ENCODE measurements at regions of chr10 and their contacts with region 1.

Region 1: GRCh38 chr10:3776796-3777571 is 8.0 kb downstream of the KLF6 start:
- DNase-seq: peak; percentile 80 to 81
- ATAC-seq: peak; percentile 20
- H3K4me3 ChIP-seq: no peak overlapping the region
- H3K27ac ChIP-seq: peak overlapping the region in 1 of 2 donors; percentile 87
- H3K4me1 ChIP-seq: peaks cover 0 to 7% of the 10 kb centered on the region in 2 donors
- H3K27me3 ChIP-seq: no peaks in the 10 kb centered on the region

Region 2: DNA sequence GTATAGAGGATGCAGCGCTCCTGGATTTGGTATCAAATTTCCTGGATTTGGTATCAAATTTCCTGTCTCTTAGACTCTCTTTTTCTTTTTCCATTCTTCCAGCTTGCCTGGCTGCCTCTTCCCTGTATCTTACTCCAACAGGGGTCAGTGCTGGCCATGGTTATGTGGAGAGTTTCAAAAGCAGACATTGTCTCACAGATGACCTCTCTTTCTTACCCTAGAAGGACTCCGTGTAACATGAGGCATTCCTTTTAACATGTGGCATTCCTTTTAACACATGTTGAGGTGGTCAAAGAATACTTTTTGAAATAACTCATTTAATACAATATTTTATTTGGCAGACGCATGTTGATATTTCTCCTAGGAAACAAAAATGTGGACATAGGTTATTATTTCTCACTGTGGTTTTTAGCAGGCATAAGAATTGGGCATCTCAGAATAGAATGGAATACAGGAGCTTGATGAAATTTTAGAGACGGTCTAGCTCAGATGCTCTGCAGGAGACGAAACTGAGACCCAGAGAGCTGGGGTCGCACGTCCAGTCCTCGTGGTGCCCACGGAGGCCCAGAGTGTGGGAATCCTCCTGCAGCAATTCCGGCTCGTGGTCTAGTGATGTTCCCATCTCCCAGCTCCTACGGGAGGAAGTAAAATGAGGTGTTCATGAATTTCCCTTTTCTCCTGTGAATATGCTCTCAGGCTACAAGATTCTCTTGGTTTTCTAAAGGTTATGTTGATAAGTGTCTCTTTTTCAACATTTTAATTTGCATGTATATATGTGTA is 544.8 kb before region 1 on chr10:
- intact Hi-C with region 1: loop called in 1 of 2 experiments (anchors 2 kb)
- DNase-seq: peak in 1 of 2 donors; percentile 74
- ATAC-seq: peak; percentile 71
- H3K4me3 ChIP-seq: no peak overlapping the region
- H3K27ac ChIP-seq: peak overlapping the region; percentile 29 to 86
- H3K4me1 ChIP-seq: no peaks in the 10 kb centered on the region
- H3K27me3 ChIP-seq: no peaks in the 10 kb centered on the region

Region 3: GRCh38 chr10:3239066-3239919 is 537.7 kb before region 1 on chr10:
- intact Hi-C with region 1: loop called (anchors 2 kb)
- DNase-seq: peak; percentile 82 to 92
- ATAC-seq: peak; percentile 87
- H3K4me3 ChIP-seq: no peak overlapping the region
- H3K27ac ChIP-seq: no peak overlapping the region
- H3K4me1 ChIP-seq: no peaks in the 10 kb centered on the region
- H3K27me3 ChIP-seq: no peaks in the 10 kb centered on the region

Region 4: GRCh38 chr10:3452173-3452626 is 324.8 kb before region 1 on chr10:
- intact Hi-C with region 1: loop called in 1 of 2 experiments (anchors 5 kb)
- DNase-seq: no peak
- ATAC-seq: peak; percentile 81
- H3K4me3 ChIP-seq: no peak overlapping the region
- H3K27ac ChIP-seq: peak overlapping the region; percentile 59 to 73
- H3K4me1 ChIP-seq: peaks cover 0 to 4% of the 10 kb centered on the region in 2 donors
- H3K27me3 ChIP-seq: no peaks in the 10 kb centered on the region

Region 5: GRCh38 chr10:3494131-3494837 is 282.7 kb before region 1 on chr10:
- intact Hi-C with region 1: loop called in 1 of 2 experiments (anchors 10 kb)
- DNase-seq: peak in 1 of 2 donors; percentile 79
- ATAC-seq: peak; percentile 85
- H3K4me3 ChIP-seq: no peak overlapping the region
- H3K27ac ChIP-seq: peak overlapping the region; percentile 54 to 90
- H3K4me1 ChIP-seq: no peaks in the 10 kb centered on the region
- H3K27me3 ChIP-seq: no peaks in the 10 kb centered on the region

Region 6: DNA sequence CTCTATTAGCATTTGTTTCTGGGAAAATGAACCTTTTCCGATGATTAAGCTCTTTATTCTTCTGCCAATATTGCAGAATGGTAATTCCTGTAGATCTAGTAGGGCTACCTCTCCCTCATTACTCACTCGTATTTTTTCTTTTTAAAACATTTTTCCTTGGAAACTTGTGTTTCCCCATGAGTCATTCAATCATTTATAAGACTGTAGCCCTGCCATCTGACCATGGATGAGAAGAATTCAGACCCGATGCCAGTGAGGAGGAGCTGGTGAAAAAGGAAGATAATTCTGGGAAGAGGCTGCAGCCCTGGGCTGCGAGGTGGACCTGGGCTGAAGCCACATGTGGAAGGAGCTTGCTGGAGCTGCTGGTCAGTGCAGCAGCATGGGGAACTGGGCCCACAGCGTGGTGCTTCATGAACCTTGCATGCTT is 234.8 kb before region 1 on chr10:
- intact Hi-C with region 1: loop called in 1 of 2 experiments (anchors 2 kb)
- DNase-seq: peak; percentile 76 to 83
- ATAC-seq: peak; percentile 59
- H3K4me3 ChIP-seq: no peak overlapping the region
- H3K27ac ChIP-seq: peak overlapping the region in 1 of 2 donors; percentile 3
- H3K4me1 ChIP-seq: no peaks in the 10 kb centered on the region
- H3K27me3 ChIP-seq: no peaks in the 10 kb centered on the region

Region 7: GRCh38 chr10:3554121-3554522 is 222.9 kb before region 1 on chr10:
- intact Hi-C with region 1: no loop called
- DNase-seq: no peak
- ATAC-seq: no peak
- H3K4me3 ChIP-seq: no peak overlapping the region
- H3K27ac ChIP-seq: no peak overlapping the region
- H3K4me1 ChIP-seq: no peaks in the 10 kb centered on the region
- H3K27me3 ChIP-seq: no peaks in the 10 kb centered on the region

Region 8: DNA sequence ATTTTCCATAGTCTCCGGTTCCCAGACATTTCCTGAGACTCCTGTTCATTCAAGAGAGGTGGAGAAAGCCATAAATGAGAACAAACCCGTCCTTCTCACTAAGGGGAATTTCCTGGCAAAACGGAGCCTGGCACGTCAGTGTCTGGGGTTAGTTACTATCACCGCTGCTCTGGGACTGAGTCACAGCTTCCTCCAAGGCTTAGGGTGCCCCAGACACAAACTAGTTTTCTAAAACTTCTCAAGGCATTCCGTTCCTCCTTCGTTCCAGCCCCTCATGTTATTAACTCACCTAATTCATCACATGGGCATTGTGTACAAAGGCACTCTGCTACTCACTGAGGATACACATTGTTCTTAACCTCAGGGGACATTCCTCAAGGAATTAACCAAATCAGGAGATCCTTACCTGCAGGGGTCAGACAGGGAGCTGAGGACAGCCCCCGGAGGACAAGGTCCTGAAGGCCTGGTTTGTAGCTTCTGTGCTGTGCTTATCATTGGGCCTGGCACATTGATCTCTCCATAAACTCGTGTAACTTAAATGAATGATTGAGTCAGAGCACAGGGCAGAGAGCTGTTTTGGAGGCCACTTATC is 111.0 kb after region 1 on chr10:
- intact Hi-C with region 1: loop called in 1 of 2 experiments (anchors 2 kb)
- DNase-seq: peak; percentile 87 to 90
- ATAC-seq: peak; percentile 52
- H3K4me3 ChIP-seq: no peak overlapping the region
- H3K27ac ChIP-seq: peak overlapping the region; percentile 92 to 100
- H3K4me1 ChIP-seq: peaks cover 3 to 5% of the 10 kb centered on the region in 2 donors
- H3K27me3 ChIP-seq: no peaks in the 10 kb centered on the region